Esophagus muscularis mucosa (tissue), 4 donors: ENCODE measurements at regions of chr7 and their contacts with region 1.

Region 1: DNA sequence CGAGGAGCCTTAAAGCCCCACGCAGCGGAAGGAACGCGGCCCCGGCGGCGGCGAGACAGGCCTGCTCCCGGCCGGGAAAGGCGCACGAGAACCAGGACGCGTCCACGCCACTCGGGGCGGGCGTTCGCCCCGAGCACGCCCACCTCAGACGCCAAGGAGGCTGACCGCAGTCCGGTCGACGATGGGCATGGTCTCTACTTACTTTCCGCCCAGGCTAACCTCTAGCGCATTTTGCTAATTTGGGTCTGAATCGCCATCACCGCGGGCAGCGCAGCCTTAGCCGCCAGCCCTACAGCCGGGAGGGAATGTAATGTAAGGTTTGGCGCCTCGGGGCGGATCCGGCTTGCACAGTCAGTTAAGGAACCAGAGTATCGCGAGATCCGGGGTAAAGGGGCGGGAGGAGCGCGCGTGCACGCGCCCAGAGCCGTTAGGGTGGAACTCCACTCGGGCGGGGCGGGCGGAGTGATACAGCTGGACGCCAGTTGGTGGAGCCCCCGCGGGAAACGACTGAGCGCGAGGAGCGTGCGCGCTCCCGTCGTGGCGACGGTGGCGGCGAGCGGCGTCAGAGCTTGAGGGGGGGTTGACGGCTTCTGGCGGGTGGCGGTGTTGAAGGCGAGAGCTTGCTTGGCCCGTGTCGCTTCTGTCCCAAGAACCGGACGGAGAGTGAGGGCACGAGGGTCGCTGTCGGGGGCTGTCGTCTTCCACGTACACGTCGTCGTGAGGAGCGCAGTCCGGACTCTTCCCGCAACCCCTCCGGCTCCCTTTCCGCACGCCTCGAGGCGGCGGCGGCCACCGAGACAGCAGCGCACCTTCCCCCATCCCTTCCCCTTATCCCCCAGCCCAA is at the start of gene LUC7L2:
- DNase-seq: peak; percentile 100
- H3K4me3 ChIP-seq: peak within 1 kb of the TSS; percentile 78 to 100 (median 94)
- H3K27ac ChIP-seq: peak within 1 kb of the TSS; percentile 97 to 100 (median 100)
- H3K4me1 ChIP-seq: peaks cover 35 to 49% (median 45%) of the 10 kb centered on the region in 4 donors
- H3K27me3 ChIP-seq: no peaks in the 10 kb centered on the region
- CTCF ChIP-seq: no peak
- EP300 ChIP-seq: no peak
- POLR2A ChIP-seq: peak; percentile 75
- total RNA-seq, gene LUC7L2: 56.0 to 63.7 (median 58.3) TPM

Region 2: GRCh38 chr7:139341776-139342226 is 17.8 kb before region 1 on chr7:
- intact Hi-C with region 1: loop called (anchors 2 kb)
- DNase-seq: no peak
- H3K4me3 ChIP-seq: peak overlapping the region; percentile 75 to 92 (median 78)
- H3K27ac ChIP-seq: peak overlapping the region; percentile 97 to 100 (median 98)
- H3K4me1 ChIP-seq: peaks cover 9 to 20% (median 18%) of the 10 kb centered on the region in 4 donors
- H3K27me3 ChIP-seq: no peaks in the 10 kb centered on the region
- CTCF ChIP-seq: no peak
- EP300 ChIP-seq: no peak
- POLR2A ChIP-seq: no peak